Prostate gland (tissue), 2 donors: ENCODE measurements at regions of chr19 and their contacts with region 1.

Region 1: DNA sequence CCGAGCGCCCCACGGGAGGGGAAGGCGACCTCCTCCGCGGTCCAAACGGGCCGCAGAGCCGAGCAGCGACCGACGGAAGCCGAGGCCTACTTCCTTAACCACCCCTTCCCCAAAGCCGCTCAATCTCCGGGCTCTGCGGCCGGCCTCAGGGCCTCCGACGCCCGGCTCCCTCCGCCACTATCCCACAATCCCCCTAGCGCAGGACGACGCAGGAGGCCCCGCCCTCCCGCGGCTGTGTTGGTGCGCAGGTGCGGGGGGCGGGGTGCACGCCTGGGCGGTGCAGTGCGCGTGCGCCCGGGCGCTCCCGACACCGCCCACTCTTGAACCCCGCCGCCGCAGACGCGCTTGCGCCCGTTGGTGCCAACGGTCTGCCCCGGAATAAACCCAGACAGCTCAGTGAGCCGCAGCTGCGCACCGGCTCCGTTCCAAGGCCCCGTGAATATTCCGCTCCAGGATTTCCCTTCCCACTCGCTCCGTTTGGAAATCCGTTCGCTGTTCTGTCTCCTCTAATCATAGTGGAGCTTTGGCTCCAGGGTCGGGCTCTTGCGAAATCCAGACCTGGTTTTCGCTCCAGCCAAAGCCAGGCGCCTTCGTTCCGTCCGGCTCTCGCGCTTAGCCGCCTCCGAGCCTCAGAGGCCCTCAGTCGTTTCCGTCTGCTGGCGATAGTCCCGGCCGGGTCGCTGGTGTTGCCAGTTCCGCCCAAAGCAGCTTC is at the start of gene PPP6R1:
- DNase-seq: peak; percentile 97
- H3K4me3 ChIP-seq: peak within 1 kb of the TSS; percentile 89 to 94
- H3K27ac ChIP-seq: peak within 1 kb of the TSS; percentile 83 to 90
- H3K4me1 ChIP-seq: peaks cover 7% of the 10 kb centered on the region
- H3K27me3 ChIP-seq: no peaks in the 10 kb centered on the region
- CTCF ChIP-seq: peak in 2 of 4 experiments; percentile 13 to 14
- POLR2A ChIP-seq: peak; percentile 93
- total RNA-seq, gene PPP6R1: 49.5 to 112 TPM

Region 2: DNA sequence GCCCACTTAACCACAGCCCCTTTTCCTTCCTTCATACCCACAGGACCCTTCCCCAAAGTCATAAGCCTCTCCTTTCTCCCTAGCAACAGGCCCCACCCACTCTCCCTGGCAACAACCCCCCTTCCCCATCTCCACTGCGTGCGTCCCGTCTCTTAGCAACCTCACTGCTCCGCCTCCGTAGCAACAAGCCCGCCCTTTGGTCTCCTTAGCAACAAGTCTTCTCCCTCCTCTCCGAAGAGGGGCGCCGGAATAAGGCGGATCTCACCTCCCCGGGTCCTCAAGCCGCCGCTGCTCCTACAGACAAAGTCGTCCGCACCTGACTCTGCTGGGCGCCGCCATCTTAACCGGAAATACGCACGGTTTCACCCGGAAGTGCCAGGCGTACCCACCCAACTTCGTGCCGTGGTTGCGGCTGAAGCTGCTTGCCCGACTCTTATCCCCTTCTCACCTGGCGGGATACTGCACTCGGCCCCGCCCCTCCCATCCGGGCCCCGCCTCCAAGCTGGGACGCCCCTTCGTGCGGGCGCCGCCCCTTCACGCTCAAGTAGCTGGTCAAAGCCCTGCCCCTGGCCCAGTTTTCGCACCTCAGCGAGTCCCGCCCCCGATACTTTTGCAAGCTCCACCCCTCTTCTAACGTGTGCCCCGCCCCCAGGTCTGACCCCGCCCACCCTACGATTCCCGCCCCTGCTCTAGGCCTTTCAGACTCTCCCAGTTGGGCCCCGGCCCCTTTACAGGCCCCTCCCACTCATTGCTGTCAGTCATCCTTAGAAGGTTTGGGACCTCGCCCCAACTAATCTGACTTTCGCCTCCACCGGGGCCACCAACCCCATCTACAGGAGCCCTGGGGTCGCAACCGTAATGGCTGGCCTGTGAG is 21.0 kb after region 1 on chr19 and contains the start of gene HSPBP1:
- intact Hi-C with region 1: loop called (anchors 1 kb)
- DNase-seq: peak; percentile 94
- H3K4me3 ChIP-seq: peak within 1 kb of the TSS; percentile 53 to 69
- H3K27ac ChIP-seq: peak within 1 kb of the TSS; percentile 68 to 81
- H3K4me1 ChIP-seq: peaks cover 3% of the 10 kb centered on the region
- H3K27me3 ChIP-seq: no peaks in the 10 kb centered on the region
- CTCF ChIP-seq: peak in 1 of 4 experiments; percentile 6
- POLR2A ChIP-seq: peak; percentile 26
- total RNA-seq, gene HSPBP1: 33.6 to 36.0 TPM